ENCODE measurements at regions of chr18 and their contacts with region 1.

Region 1: DNA sequence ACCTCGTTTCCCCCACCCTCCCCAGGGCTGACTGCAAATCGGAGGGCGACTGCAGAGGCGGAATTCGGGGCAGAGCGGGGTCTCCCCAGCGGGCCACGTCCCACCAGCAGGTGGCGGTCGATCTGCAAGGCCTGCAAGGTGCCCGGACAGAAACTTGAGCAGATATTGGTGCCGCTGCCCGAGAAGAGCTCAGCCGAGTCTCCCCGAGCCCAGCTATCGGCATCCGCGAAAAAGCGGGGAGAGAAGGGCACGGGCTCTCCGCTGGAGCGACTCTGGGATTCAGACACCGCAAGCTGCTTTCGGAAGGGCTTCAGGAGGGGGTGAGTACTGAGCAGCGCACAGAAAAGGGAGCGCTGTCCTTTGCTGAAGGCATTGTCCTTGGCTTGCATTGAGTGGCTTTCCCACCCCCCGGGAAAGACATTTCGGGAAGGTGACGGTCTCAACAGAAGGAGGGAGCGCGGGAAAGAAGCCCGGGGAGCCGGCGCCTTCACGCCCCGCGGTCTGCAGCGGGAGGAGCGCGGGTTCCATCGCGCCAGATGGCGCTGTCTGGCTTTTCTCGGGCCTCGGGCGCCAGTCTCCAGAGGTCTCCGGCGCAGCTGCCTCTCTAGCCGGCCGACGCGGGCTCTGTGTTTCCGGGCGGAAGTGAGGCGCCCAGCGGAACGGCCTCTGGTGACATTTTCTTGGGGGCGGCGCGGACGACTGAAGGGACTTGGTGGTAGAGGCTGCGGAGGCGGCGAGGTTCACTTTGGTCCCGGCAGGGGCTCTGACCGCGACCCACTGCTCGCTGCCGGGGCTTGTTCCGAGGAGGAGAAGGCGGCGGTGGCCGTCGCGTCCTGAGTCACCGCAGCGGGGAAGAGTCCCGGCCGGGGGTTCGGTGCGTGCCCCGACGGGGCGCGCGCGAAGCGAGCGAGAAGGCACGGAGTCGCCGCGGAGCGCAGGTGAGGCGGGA is 69.5 kb downstream of the HAUS1 start:
- DNase-seq: peak; percentile 83 to 89
- ATAC-seq: peak; percentile 94 to 96
- H3K4me3 ChIP-seq: peak overlapping the region; percentile 98
- H3K27ac ChIP-seq: peak overlapping the region; percentile 92 to 98
- H3K4me1 ChIP-seq: peaks cover 22% of the 10 kb centered on the region
- CTCF ChIP-seq: peak; percentile 55
- EP300 ChIP-seq: 0 out of 5 replicates have a peak, but pooled peaks of 1 of the 2 experiments have one; percentile 2
- POLR2A ChIP-seq: peak; percentile 29
- RAD21 ChIP-seq: peak; percentile 67 to 72

Region 2: GRCh38 chr18:46148810-46149209 is 24.9 kb before region 1 on chr18:
- CTCF ChIA-PET with region 1: interaction called, 103 read pairs
- POLR2A ChIA-PET with region 1: interaction called, 8 read pairs
- DNase-seq: peak; percentile 31 to 66
- ATAC-seq: peak; percentile 60 to 72; a peak in 4 of 6 replicates
- H3K4me3 ChIP-seq: no peak overlapping the region
- H3K27ac ChIP-seq: peak overlapping the region in 1 of 2 experiments; percentile 63; a peak in 1 of 6 replicates
- H3K4me1 ChIP-seq: peaks cover 23% of the 10 kb centered on the region
- CTCF ChIP-seq: peak; percentile 60
- EP300 ChIP-seq: no peak
- POLR2A ChIP-seq: no peak
- RAD21 ChIP-seq: peak; percentile 75 to 78

Region 3: GRCh38 chr18:46158498-46158897 is 15.2 kb before region 1 on chr18:
- CTCF ChIA-PET with region 1: interaction called, 103 read pairs
- POLR2A ChIA-PET with region 1: interaction called, 8 read pairs
- DNase-seq: no peak
- ATAC-seq: no peak; a peak in 1 of 6 replicates
- H3K4me3 ChIP-seq: no peak overlapping the region
- H3K27ac ChIP-seq: peak overlapping the region in 1 of 2 experiments; percentile 45; a peak in 2 of 6 replicates
- H3K4me1 ChIP-seq: peaks cover 51% of the 10 kb centered on the region
- CTCF ChIP-seq: no peak
- EP300 ChIP-seq: no peak
- POLR2A ChIP-seq: no peak
- RAD21 ChIP-seq: no peak

Region 4: GRCh38 chr18:46196627-46197243 is 23.1 kb after region 1 on chr18:
- CTCF ChIA-PET with region 1: interaction called, 12 read pairs
- POLR2A ChIA-PET with region 1: interaction called, 3 read pairs
- DNase-seq: no peak
- ATAC-seq: no peak
- H3K4me3 ChIP-seq: no peak overlapping the region
- H3K27ac ChIP-seq: no peak overlapping the region
- H3K4me1 ChIP-seq: peaks cover 38% of the 10 kb centered on the region
- CTCF ChIP-seq: no peak
- EP300 ChIP-seq: no peak
- POLR2A ChIP-seq: no peak
- RAD21 ChIP-seq: no peak

Region 5: DNA sequence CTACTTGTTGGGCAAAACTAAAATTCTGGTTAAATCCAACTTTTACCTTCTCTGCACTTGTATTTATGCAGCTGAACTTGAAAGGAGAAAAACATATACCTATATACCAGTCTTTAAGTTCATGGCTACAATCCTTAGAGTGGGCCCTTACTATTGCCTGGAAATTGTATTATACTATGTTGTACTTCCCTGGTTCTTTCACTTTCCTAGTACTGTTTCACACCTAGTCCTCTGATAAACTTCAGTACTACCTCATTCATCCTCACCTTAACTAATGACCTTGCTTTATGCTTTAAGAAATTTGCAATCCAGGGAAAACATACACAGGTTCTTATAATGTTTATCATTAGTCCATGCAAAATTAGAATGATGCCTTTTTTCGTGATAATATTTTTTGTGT is 34.3 kb after region 1 on chr18:
- CTCF ChIA-PET with region 1: interaction called, 35 read pairs
- POLR2A ChIA-PET with region 1: no interaction called
- DNase-seq: no peak
- ATAC-seq: no peak
- H3K4me3 ChIP-seq: no peak overlapping the region
- H3K27ac ChIP-seq: no peak overlapping the region
- H3K4me1 ChIP-seq: 0 out of 3 replicates have a peak, but pooled peaks cover 3% of the 10 kb centered on the region
- CTCF ChIP-seq: no peak
- EP300 ChIP-seq: no peak
- POLR2A ChIP-seq: no peak
- RAD21 ChIP-seq: no peak

Region 6: DNA sequence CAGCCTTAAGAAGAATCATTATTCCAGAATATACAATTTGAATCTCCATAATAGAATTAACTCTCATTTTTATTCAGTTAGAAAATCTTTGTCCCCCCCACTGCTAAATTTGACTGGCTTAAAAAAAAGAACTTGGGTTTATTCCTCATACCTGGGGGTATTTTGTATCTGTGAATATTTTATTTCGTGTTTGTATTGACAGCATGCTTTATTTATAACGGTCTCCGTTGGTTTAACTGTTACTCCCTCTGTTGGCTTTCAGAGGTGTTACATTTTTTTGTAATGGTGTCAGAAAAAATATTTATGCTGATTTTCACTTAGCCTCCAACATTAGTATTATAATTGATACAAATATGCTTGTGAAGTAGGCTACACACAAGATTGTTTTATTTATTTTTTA is 39.6 kb after region 1 on chr18:
- CTCF ChIA-PET with region 1: interaction called, 35 read pairs
- POLR2A ChIA-PET with region 1: no interaction called
- DNase-seq: peak; percentile 14 to 40
- ATAC-seq: no peak
- H3K4me3 ChIP-seq: no peak overlapping the region
- H3K27ac ChIP-seq: no peak overlapping the region
- H3K4me1 ChIP-seq: 0 out of 3 replicates have a peak, but pooled peaks cover 3% of the 10 kb centered on the region
- CTCF ChIP-seq: peak; percentile 49
- EP300 ChIP-seq: no peak
- POLR2A ChIP-seq: no peak
- RAD21 ChIP-seq: peak; percentile 47; a peak in 4 of 5 replicates

Region 7: GRCh38 chr18:46445914-46446313 is 272.2 kb after region 1 on chr18:
- CTCF ChIA-PET with region 1: no interaction called
- POLR2A ChIA-PET with region 1: no interaction called
- DNase-seq: no peak
- ATAC-seq: no peak
- H3K4me3 ChIP-seq: no peak overlapping the region
- H3K27ac ChIP-seq: no peak overlapping the region
- H3K4me1 ChIP-seq: no peaks in the 10 kb centered on the region
- CTCF ChIP-seq: no peak
- EP300 ChIP-seq: no peak
- POLR2A ChIP-seq: no peak
- RAD21 ChIP-seq: no peak

Region 8: GRCh38 chr18:46660955-46661749 is 487.5 kb after region 1 on chr18:
- CTCF ChIA-PET with region 1: interaction called, 38 read pairs
- POLR2A ChIA-PET with region 1: no interaction called
- DNase-seq: peak in 1 of 2 experiments; percentile 8
- ATAC-seq: no peak; a peak in 1 of 6 replicates
- H3K4me3 ChIP-seq: no peak overlapping the region
- H3K27ac ChIP-seq: no peak overlapping the region
- H3K4me1 ChIP-seq: no peaks in the 10 kb centered on the region
- CTCF ChIP-seq: no peak
- EP300 ChIP-seq: no peak
- POLR2A ChIP-seq: no peak
- RAD21 ChIP-seq: no peak